ENCODE measurements at regions of chr5 and their contacts with region 1.

Region 1: GRCh38 chr5:147234825-147235635 is at the start of gene STK32A:
- DNase-seq: peak in 1 of 2 donors; percentile 44
- ATAC-seq: peak; percentile 57 to 87 (median 82)
- H3K4me3 ChIP-seq: peak within 1 kb of the TSS; percentile 16 to 63 (median 58)
- H3K27ac ChIP-seq: peak within 1 kb of the TSS in 4 of 10 donors; percentile 26 to 35 (median 30)
- H3K4me1 ChIP-seq: peaks cover 0 to 15% (median 10%) of the 10 kb centered on the region in 9 donors
- H3K27me3 ChIP-seq: peaks cover 0 to 56% (median 52%) of the 10 kb centered on the region in 7 donors
- CTCF ChIP-seq: no peak
- total RNA-seq, gene STK32A: 0.55 to 2.1 (median 0.76) TPM

Region 2: GRCh38 chr5:147369742-147370374 is 134.8 kb after region 1 on chr5:
- intact Hi-C with region 1: loop called in 2 of 10 experiments (anchors 5 to 10 kb)
- DNase-seq: no peak
- ATAC-seq: no peak
- H3K4me3 ChIP-seq: no peak overlapping the region
- H3K27ac ChIP-seq: no peak overlapping the region
- H3K4me1 ChIP-seq: no peaks in the 10 kb centered on the region
- H3K27me3 ChIP-seq: no peaks in the 10 kb centered on the region
- CTCF ChIP-seq: peak in 8 of 9 donors; percentile 13 to 66 (median 56)

Region 3: DNA sequence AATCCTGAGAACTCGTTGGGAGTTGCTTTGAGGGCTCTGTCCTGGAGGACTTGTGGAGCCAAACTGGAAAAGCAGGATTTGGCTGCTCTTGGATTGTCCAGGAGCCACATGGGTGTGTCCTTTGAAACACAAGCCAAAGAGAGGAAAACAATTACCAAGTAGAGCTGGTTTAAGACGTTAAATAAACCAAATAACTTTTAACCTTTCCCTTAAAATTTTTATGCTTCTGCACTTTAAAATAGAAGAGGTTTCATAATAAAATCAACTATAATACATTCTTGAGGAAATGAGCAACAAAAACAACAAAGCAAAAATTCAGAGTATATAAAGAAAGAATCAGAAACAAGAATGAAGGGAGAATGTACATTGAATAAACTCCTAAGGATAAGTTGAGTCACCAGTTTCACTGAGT is 657.8 kb after region 1 on chr5:
- intact Hi-C with region 1: no loop called
- DNase-seq: no peak
- ATAC-seq: peak in 1 of 8 donors; percentile 56
- H3K4me3 ChIP-seq: no peak overlapping the region
- H3K27ac ChIP-seq: no peak overlapping the region
- H3K4me1 ChIP-seq: peaks cover 0 to 5% (median 0%) of the 10 kb centered on the region in 9 donors
- H3K27me3 ChIP-seq: no peaks in the 10 kb centered on the region
- CTCF ChIP-seq: no peak